Activated CD4-positive, alpha-beta T cell treated with anti-CD3 and anti-CD28 coated beads for 36 hours (primary cell): ENCODE measurements at regions of chr22 and their contacts with region 1.

Region 1: DNA sequence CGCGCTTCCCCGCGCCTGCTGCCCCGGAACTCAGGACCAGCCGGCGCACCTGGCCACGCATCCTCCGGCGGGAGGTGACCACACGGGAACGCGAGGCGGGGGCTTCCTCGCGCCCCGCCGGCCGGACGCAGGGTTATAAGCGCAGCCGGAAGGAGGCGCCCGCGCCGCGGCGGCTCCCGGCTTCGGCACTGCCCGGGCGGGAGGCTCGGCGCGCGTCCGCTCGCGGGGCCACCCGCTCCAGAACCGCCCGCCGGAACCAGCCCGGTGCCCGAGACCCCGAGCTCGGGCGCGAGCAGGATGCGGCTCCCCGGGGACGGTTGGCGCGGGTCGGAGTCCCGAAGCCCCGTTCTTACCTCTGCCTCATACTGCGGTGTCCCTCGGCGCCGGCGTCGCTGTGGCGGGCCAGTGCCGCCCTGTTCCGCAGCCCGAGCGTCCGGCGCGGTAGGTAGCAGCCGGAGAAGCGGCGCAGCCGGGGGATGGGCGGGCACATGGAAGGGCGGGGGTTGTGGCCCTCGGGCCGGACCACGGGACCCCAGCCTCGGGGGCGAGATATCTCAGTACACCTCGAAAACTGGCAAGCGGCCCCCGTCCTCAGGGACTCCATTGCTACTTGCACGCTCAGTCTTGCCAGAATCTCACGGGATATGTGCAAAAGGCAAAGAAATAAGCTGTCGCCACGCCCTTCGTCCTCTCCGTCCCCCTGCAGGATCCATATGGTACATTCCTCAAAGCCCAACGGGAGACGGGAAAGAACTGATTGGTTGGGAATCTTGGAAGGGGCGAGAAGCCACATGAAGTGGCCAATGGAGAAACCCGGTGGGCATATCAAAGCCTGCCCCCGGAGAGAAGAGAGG is 23.1 kb downstream of the MICAL3 start:
- DNase-seq: peak; percentile 80
- ATAC-seq: peak; percentile 81
- H3K4me3 Mint-ChIP-seq: peak overlapping the region; percentile 88
- H3K27ac Mint-ChIP-seq: peak overlapping the region; percentile 95
- H3K4me1 Mint-ChIP-seq: peaks cover 42% of the 10 kb centered on the region
- H3K27me3 Mint-ChIP-seq: peaks cover 13% of the 10 kb centered on the region

Region 2: DNA sequence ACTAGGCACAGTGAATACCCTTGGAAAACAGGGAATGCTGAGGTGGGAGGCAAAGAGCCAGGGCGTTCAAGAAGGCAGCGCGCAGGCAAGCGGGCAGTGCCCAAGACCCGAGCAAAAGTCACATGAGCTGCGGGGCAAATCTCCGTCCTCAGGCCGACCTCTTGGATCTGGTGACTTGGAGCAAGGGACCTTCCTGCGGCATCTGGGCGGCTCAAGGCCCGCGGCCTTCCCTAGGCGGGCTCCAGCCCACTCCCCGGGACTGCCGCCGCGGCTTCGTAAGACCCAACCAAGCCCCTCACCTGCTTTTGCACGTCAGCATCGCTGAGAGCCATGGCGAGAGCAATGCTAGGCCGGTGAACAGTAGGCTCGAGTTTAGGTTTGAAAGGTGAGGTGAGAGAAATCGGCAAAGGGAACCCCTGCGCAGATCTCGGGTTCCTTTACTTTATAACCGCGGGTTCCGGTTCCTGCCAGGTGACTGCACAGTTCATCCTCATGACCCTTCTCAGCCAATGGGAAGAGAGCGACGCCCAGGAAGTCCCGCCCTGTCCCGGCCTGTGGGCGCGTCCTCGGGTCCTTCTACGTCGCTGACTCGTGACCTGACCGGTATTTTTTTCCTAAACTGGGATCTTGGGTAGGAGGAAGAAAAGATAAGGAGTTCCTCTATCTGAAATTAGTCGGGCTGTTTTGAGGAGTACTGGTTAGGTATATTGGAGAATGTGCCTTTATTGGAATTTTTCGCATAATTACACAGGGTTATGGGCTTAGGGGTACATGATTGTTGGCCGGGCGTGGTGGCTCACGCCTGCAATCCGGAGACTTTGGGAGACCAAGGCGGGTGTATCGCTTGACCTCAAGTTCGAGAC is 372.7 kb before region 1 on chr22 and contains the start of gene ATP6V1E1:
- CTCF ChIA-PET with region 1: no interaction called
- POLR2A ChIA-PET with region 1: no interaction called
- intact Hi-C with region 1: loop called in 1 of 2 experiments (anchors 1 kb)
- DNase-seq: peak; percentile 96
- ATAC-seq: peak; percentile 100
- H3K4me3 Mint-ChIP-seq: peak within 1 kb of the TSS; percentile 95
- H3K27ac Mint-ChIP-seq: peak within 1 kb of the TSS; percentile 93
- H3K4me1 Mint-ChIP-seq: peaks cover 19% of the 10 kb centered on the region
- H3K27me3 Mint-ChIP-seq: no peaks in the 10 kb centered on the region
- total RNA-seq, gene ATP6V1E1: 83.5 to 95.6 TPM

Region 3: DNA sequence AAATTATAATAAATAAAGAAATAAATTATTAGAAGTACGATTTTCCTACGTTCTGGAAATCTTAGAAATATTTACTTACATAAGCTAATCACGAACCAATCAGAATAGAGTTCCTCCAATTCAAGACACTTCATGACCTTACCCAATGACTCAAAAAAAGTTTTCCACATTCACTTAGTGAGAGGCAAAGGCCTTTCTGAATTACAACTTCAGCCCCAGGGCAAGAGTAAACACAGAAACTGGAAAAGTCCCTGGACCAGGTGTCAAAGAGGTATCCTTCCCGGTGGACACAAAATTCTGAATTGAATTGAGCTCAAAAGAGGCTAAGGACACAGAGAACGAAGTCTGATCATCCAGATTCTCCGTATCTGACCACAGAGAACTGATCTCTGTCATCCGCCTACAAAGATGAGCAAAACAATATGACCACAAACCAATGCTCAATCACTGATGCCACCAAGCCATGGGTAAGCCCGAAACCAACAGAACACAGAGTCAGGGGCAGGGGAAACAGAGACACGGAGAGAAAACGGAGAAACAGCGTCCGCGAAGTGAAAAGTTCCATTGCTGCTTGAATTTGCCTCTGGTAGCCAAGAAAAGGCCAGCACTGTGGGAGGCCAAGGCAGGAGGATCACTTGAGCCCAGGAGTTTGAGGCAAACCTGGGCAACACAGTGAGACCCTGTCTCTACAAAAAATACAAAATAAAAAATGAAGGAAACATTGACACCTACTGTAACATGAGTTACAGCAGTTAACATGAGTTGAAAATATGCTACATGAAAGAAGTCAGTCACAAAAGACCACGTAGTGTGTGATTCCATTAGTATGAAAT is 233.8 kb before region 1 on chr22:
- CTCF ChIA-PET with region 1: no interaction called
- POLR2A ChIA-PET with region 1: no interaction called
- intact Hi-C with region 1: loop called in 1 of 2 experiments (anchors 5 kb)
- DNase-seq: peak; percentile 78
- ATAC-seq: peak; percentile 86
- H3K4me3 Mint-ChIP-seq: peak overlapping the region; percentile 50
- H3K27ac Mint-ChIP-seq: peak overlapping the region; percentile 55
- H3K4me1 Mint-ChIP-seq: peaks cover 54% of the 10 kb centered on the region
- H3K27me3 Mint-ChIP-seq: peaks cover 7% of the 10 kb centered on the region

Region 4: GRCh38 chr22:18024276-18024947 is 23.1 kb after region 1 on chr22 and contains the start of gene MICAL3:
- CTCF ChIA-PET with region 1: interaction called, 3 read pairs
- POLR2A ChIA-PET with region 1: no interaction called
- intact Hi-C with region 1: loop called in 1 of 2 experiments (anchors 1 kb)
- DNase-seq: peak; percentile 78
- ATAC-seq: peak; percentile 97
- H3K4me3 Mint-ChIP-seq: peak within 1 kb of the TSS; percentile 73
- H3K27ac Mint-ChIP-seq: no peak within 1 kb of the TSS
- H3K4me1 Mint-ChIP-seq: peaks cover 11% of the 10 kb centered on the region
- H3K27me3 Mint-ChIP-seq: peaks cover 39% of the 10 kb centered on the region
- total RNA-seq, gene MICAL3: 21.9 to 22.5 TPM

Region 5: GRCh38 chr22:18152519-18152918 is 151.3 kb after region 1 on chr22:
- CTCF ChIA-PET with region 1: no interaction called
- POLR2A ChIA-PET with region 1: no interaction called
- intact Hi-C with region 1: loop called in 1 of 2 experiments (anchors 5 kb)
- DNase-seq: peak; percentile 62
- ATAC-seq: peak; percentile 52
- H3K4me3 Mint-ChIP-seq: peak overlapping the region; percentile 73
- H3K27ac Mint-ChIP-seq: peak overlapping the region; percentile 73
- H3K4me1 Mint-ChIP-seq: peaks cover 35% of the 10 kb centered on the region
- H3K27me3 Mint-ChIP-seq: no peaks in the 10 kb centered on the region